GM13977 (cell line): ENCODE measurements at regions of chr1 and their contacts with region 1.

Region 1: DNA sequence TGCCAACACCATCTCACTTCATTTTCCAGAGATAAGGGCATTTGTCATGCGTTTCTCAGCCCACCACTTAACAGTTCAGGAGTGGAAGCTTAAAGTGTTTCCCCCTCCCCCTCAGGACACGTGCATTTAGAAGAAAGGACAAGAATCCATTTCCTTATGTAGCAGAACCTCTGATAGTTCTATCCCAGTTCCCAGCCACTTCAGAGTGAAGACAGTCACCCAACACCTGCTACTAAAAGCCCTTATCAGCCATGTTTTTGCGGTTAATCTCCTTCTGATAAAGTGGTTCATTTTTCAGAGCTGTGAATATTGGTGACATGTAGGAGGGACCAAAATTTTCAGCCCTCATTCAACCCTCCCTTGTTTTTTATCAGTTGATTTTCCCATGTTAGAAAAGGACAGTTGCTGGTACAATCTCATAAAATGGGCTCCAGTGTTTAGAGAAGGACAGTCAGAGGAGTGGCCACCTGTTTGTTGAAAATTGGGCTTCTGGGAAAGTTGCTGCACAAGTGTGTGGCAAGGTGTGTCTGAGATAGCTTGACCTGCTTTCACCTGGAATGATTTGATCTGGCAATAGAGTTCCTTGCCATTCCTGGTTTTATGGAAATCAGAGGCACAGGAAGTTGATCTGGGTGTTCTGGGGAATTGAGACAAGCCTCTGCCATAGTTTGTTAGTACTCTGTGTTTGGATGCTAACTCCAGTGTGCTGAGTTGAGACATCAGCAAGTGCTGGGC is 114.0 kb downstream of the PPP1R12B start:
- DNase-seq: no peak
- CTCF ChIP-seq: no peak

Region 2: GRCh38 chr1:202160377-202160940 is 302.1 kb before region 1 on chr1 and contains the start of gene PTPN7:
- in situ Hi-C with region 1: no loop called
- DNase-seq: peak; percentile 78
- CTCF ChIP-seq: peak; percentile 68

Region 3: DNA sequence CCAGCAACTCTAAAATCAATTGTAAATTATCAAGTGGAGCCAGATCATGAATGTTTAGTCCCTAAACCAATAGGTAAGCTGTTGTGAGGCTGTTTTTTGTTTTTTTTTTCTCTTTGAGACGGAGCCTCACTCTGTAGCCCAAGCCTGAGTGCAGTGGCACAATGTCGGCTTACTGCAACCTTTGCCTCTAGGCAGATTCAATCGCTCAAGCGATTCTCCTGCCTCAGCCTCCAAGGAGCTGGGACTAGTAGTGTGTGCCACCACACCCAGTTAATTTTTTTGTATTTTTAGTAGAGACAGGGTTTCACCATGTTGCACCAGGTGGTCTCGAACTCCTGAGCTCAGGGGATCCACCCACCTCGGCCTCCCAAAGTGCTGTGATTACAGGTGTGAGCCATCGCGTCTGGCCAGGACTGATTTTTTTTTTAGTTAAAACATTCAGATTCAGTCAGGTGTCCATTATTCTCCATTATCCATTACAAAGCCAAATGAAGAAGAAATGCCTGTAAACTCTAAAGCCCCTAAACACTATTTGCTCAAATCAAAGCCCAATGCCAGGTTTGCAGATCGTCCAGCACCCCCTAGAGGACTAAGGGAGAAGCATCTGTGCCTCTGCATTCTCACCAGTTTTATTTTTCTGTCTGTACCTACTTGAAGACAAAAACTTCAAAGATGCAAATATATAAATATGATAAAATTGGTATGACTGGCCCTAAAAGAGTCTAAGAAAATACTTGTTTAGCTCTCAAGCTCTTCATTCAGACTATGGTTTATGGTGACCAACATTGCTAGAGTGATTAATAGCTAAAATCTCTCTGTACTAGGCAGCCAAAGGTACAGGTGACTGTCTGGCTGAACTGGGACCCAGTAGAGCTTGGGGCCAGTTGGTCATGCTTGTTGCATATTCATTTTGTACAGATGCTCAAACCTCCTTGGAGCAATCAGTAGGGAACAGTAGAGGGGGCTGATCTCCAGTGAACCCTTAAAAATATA is 109.1 kb after region 1 on chr1:
- in situ Hi-C with region 1: loop called (anchors 10 kb)
- DNase-seq: peak; percentile 47
- CTCF ChIP-seq: peak; percentile 80

Region 4: DNA sequence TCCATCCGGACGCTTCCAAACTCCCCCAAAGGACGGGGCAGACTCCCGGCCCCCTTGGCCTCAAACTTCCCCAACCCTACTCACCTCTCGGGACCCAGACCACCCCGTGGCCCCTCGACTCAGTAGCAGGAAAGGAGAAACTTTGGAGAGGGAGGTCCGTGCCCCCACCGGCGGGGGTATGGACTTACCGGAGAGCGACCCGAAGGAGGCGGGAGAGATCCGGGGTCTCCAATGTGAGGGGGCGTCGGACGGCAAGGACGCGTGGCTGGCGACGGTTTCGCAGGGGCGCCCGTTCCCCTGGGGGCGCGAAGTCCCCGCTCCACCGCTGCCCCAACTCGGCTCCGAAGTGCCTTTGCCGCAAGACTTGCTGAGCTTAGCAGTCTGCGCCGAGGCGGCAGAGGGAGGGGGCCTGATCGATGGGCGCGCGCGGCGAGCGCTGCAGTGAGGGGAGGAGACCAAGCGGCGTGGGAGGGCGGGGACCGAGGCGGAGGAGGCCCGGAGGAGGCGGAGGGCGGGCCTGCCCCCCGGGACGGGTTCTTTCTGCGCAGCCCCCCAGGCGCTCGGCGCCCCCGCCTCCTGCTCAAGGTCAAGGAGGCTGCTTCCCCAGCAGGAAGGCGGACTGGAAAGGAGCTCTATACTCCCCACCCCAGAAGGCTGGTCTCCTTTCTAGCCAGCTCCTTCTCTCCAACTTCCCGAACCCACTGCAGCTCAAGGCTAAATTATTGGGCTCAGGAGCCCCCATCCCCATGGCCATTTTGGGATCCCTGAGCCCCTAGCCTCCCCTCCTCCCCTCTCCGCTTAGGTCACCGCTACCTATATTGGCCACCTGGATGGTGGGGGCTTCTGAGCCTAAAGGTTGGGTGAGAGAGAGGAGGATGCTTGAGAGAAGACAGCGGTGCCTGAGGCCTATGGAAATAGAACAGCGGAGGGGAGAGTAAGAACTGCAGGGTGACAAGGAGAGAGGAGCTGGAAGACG is 247.8 kb after region 1 on chr1 and contains the start of gene SYT2:
- in situ Hi-C with region 1: loop called (anchors 25 kb)
- DNase-seq: no peak
- CTCF ChIP-seq: no peak